ENCODE measurements at regions of chr14 and their contacts with region 1.

Region 1: GRCh38 chr14:32382704-32383103 is 53.6 kb downstream of the AKAP6 start:
- DNase-seq: peak in 1 of 2 experiments; percentile 40
- ATAC-seq: peak; percentile 91 to 93
- H3K4me3 ChIP-seq: no peak overlapping the region
- H3K27ac ChIP-seq: no peak overlapping the region
- H3K4me1 ChIP-seq: no peaks in the 10 kb centered on the region
- CTCF ChIP-seq: peak; percentile 43
- EP300 ChIP-seq: no peak
- POLR2A ChIP-seq: no peak
- RAD21 ChIP-seq: peak; percentile 68 to 76

Region 2: GRCh38 chr14:32372154-32372553 is 10.6 kb before region 1 on chr14:
- CTCF ChIA-PET with region 1: interaction called, 10 read pairs
- POLR2A ChIA-PET with region 1: no interaction called
- DNase-seq: peak in 1 of 2 experiments; percentile 11
- ATAC-seq: no peak
- H3K4me3 ChIP-seq: no peak overlapping the region
- H3K27ac ChIP-seq: peak overlapping the region in 1 of 2 experiments; percentile 36; a peak in 3 of 6 replicates
- H3K4me1 ChIP-seq: peaks cover 25% of the 10 kb centered on the region
- CTCF ChIP-seq: no peak
- EP300 ChIP-seq: no peak
- POLR2A ChIP-seq: no peak
- RAD21 ChIP-seq: no peak